Activated CD4-positive, alpha-beta T cell treated with anti-CD3 and anti-CD28 coated beads, Interleukin-2, amount 10 ng/mL, durations not matched to agents 24 days and 14 days (primary cell): ENCODE measurements at regions of chr3 and their contacts with region 1.

Region 1: GRCh38 chr3:5057857-5058324 is 64.2 kb upstream of the ARL8B start:
- DNase-seq: peak; percentile 93
- H3K4me3 Mint-ChIP-seq: peak overlapping the region; percentile 29
- H3K27ac Mint-ChIP-seq: no peak overlapping the region
- H3K4me1 Mint-ChIP-seq: peaks cover 36% of the 10 kb centered on the region
- H3K27me3 Mint-ChIP-seq: peaks cover 7% of the 10 kb centered on the region

Region 2: DNA sequence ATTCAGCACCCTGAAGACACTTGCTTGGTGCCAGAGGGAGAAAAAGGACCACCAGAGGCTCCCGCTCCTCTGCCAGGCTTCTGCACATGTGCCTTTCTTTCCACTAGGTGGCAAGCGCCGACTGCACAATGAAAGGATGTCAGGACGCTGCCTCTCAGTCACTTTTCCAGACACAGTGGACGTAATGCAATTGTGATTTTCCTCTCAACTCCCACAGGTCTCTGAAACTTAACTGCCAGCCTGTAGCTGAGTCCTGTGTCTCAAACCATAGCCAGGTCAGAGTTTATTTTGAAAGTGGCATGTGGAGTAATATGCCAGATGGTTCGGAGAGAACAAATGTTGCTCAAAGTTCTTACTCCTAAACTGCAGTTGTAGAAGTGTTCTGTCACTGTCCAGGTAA is 401.8 kb before region 1 on chr3:
- intact Hi-C with region 1: loop called (anchors 5 kb)
- DNase-seq: peak; percentile 64
- H3K4me3 Mint-ChIP-seq: no peak overlapping the region
- H3K27ac Mint-ChIP-seq: no peak overlapping the region
- H3K4me1 Mint-ChIP-seq: peaks cover 4% of the 10 kb centered on the region
- H3K27me3 Mint-ChIP-seq: no peaks in the 10 kb centered on the region

Region 3: GRCh38 chr3:4712143-4712542 is 345.7 kb before region 1 on chr3:
- intact Hi-C with region 1: loop called (anchors 1 kb)
- DNase-seq: no peak
- H3K4me3 Mint-ChIP-seq: no peak overlapping the region
- H3K27ac Mint-ChIP-seq: no peak overlapping the region
- H3K4me1 Mint-ChIP-seq: peaks cover 27% of the 10 kb centered on the region
- H3K27me3 Mint-ChIP-seq: no peaks in the 10 kb centered on the region

Region 4: GRCh38 chr3:4888913-4889846 is 168.7 kb before region 1 on chr3:
- intact Hi-C with region 1: loop called (anchors 5 kb)
- DNase-seq: peak; percentile 87
- H3K4me3 Mint-ChIP-seq: peak overlapping the region; percentile 49
- H3K27ac Mint-ChIP-seq: peak overlapping the region; percentile 89
- H3K4me1 Mint-ChIP-seq: peaks cover 44% of the 10 kb centered on the region
- H3K27me3 Mint-ChIP-seq: no peaks in the 10 kb centered on the region

Region 5: GRCh38 chr3:4986782-4987537 is 70.9 kb before region 1 on chr3:
- intact Hi-C with region 1: loop called (anchors 2 kb)
- DNase-seq: peak; percentile 94
- H3K4me3 Mint-ChIP-seq: peak overlapping the region; percentile 84
- H3K27ac Mint-ChIP-seq: peak overlapping the region; percentile 94
- H3K4me1 Mint-ChIP-seq: peaks cover 54% of the 10 kb centered on the region
- H3K27me3 Mint-ChIP-seq: no peaks in the 10 kb centered on the region

Region 6: DNA sequence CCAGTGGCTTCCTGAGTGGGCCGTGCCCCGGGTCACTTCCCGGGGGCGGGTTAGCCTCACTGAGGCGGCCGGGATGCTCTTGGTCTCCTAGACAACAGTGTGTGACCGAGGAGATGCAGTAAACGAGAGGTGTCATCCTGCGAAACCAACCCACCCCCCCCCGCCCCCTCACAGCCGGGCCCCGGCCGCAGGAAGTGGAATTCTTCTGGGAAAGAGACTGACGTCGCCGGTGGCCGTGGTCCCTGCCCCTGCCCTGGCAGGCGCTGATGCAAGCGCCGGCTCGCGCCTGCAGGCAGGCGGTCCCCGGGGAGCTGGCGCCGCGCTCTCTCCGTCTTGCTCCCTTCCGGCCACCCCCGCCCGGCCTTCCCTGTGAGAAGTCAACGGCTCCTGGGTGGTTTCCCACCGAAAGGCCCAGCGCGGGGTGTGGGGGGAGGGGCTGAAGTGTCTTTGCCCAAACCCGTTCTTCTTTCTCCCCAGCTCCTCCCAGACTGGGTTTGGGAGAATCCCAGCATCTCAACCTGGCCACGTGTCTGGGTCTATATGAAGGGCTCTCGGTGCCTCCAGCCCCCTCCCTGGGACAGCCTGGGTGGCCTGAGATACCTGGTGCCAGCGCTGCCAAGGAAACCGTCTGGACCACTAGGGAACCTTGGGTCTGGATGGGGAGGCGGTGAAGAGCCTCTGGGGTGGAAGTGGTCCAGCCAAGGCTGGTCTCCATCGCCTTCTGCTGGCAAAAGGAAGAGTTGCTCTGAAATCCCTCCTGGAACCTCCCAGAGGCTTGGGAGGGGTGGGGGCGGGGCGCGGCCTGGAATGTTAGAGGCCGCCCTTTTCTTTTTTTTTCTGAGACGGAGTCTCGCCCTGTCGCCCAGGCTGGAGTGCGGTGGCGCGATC is 31.3 kb before region 1 on chr3:
- intact Hi-C with region 1: loop called (anchors 5 kb)
- DNase-seq: peak; percentile 90
- H3K4me3 Mint-ChIP-seq: peak overlapping the region; percentile 87
- H3K27ac Mint-ChIP-seq: peak overlapping the region; percentile 93
- H3K4me1 Mint-ChIP-seq: peaks cover 49% of the 10 kb centered on the region
- H3K27me3 Mint-ChIP-seq: no peaks in the 10 kb centered on the region

Region 7: GRCh38 chr3:5035692-5036391 is 22.0 kb before region 1 on chr3:
- intact Hi-C with region 1: loop called (anchors 2 kb)
- DNase-seq: no peak
- H3K4me3 Mint-ChIP-seq: no peak overlapping the region
- H3K27ac Mint-ChIP-seq: no peak overlapping the region
- H3K4me1 Mint-ChIP-seq: peaks cover 33% of the 10 kb centered on the region
- H3K27me3 Mint-ChIP-seq: no peaks in the 10 kb centered on the region